Activated T-helper 1 cell treated with anti-CD3 and anti-CD28 coated beads, Interleukin-12 subunit alpha, Interleukin-12 subunit beta, Interleukin-2, Interleukin-4 antibody, amounts not matched to agents 30 ng/mL and 10 ng/mL and 1 ng/mL, durations not matched to agents 14 hours and 24 hours and 36 hours (primary cell): ENCODE measurements at regions of chr19 and their contacts with region 1.

Region 1: DNA sequence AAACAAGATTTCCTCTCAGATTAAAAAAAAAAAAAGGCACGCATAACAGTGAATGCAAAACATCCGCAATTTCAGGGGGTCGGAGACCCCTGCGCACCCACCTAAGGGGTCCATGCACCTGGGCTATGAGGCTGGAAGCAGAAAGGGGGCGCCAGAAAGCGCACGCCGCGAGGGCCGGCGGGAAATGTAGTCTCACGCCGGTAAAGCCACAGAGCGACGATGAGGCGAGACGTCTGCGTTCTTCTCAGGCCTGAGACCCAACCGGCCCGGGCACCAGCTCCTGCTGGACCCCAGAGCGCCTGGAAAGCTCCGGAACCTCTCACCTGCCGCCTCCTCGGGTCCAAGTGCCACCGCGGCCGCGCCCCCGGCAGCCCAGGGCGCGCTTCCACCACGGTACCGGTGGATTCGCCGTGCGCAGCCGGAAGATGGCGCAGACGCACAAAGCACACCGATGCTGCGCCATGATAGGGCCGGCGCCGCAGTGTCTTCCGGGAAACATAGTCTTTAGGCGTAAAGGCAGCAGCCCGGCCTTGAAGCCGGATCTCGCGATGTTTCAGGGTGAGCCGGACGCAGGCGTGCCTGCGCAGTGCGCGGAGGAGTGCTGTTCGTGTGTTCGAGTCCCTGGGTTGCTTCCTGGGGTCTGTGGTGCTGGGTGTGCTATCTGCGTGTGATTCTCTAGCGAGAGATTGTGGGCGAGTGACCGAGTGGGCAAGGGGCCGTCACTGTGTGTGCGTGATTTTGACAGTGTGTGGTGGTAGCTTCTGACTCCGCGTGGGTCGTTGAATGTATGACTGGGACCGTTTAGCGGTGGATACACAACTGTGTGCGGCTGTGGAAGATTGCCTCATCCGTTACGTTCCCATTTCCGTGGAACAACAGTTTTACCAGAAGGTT is at the start of gene ZNF582:
- DNase-seq: peak; percentile 82
- H3K4me3 Mint-ChIP-seq: peak within 1 kb of the TSS; percentile 94
- H3K27ac Mint-ChIP-seq: peak within 1 kb of the TSS; percentile 90
- H3K4me1 Mint-ChIP-seq: peaks cover 7% of the 10 kb centered on the region
- H3K27me3 Mint-ChIP-seq: peaks cover 1% of the 10 kb centered on the region
- total RNA-seq, gene ZNF582: 1.2 and 1.3 TPM in 2 replicates

Region 2: DNA sequence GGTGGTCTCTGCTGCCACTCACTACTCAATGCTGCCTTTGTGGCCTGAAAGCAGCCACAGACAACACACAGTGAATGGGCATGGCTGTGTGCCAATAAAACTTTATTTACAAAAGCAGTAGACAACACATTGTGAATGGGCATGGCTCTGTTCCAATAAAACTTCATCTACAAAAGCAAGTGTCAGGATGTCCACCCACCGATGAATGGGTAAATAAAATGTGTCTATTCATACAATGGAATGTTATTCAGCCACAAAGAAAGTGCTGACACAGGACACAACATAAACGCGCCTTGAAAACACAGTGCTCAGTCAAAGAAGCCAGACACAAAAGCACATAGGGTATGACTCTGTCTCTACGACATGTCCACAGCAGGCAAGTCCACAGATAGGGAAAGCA is 98.8 kb before region 1 on chr19:
- intact Hi-C with region 1: no loop called
- DNase-seq: no peak
- H3K4me3 Mint-ChIP-seq: no peak overlapping the region
- H3K27ac Mint-ChIP-seq: no peak overlapping the region
- H3K4me1 Mint-ChIP-seq: no peaks in the 10 kb centered on the region
- H3K27me3 Mint-ChIP-seq: no peaks in the 10 kb centered on the region

Region 3: GRCh38 chr19:56367829-56368711 is 25.3 kb before region 1 on chr19:
- intact Hi-C with region 1: loop called (anchors 1 kb)
- DNase-seq: peak; percentile 64
- H3K4me3 Mint-ChIP-seq: peak overlapping the region; percentile 85
- H3K27ac Mint-ChIP-seq: peak overlapping the region; percentile 57
- H3K4me1 Mint-ChIP-seq: peaks cover 15% of the 10 kb centered on the region
- H3K27me3 Mint-ChIP-seq: no peaks in the 10 kb centered on the region

Region 4: GRCh38 chr19:56477429-56478338 is 84.3 kb after region 1 on chr19:
- intact Hi-C with region 1: no loop called
- DNase-seq: peak; percentile 5
- H3K4me3 Mint-ChIP-seq: peak overlapping the region; percentile 70
- H3K27ac Mint-ChIP-seq: peak overlapping the region; percentile 63
- H3K4me1 Mint-ChIP-seq: no peaks in the 10 kb centered on the region
- H3K27me3 Mint-ChIP-seq: no peaks in the 10 kb centered on the region

Region 5: GRCh38 chr19:56567274-56568120 is 174.1 kb after region 1 on chr19 and contains the start of gene ZNF470:
- intact Hi-C with region 1: loop called (anchors 2 kb)
- DNase-seq: peak; percentile 82
- H3K4me3 Mint-ChIP-seq: peak within 1 kb of the TSS; percentile 87
- H3K27ac Mint-ChIP-seq: peak within 1 kb of the TSS; percentile 89
- H3K4me1 Mint-ChIP-seq: no peaks in the 10 kb centered on the region
- H3K27me3 Mint-ChIP-seq: no peaks in the 10 kb centered on the region
- total RNA-seq, gene ZNF470: 1.2 and 2.4 TPM in 2 replicates

Region 6: GRCh38 chr19:56594783-56595547 is 201.6 kb after region 1 on chr19 and contains the start of gene ZNF71:
- intact Hi-C with region 1: loop called (anchors 5 kb)
- DNase-seq: peak; percentile 82
- H3K4me3 Mint-ChIP-seq: peak within 1 kb of the TSS; percentile 92
- H3K27ac Mint-ChIP-seq: peak within 1 kb of the TSS; percentile 59
- H3K4me1 Mint-ChIP-seq: peaks cover 14% of the 10 kb centered on the region
- H3K27me3 Mint-ChIP-seq: no peaks in the 10 kb centered on the region
- total RNA-seq, gene ZNF71: 5.1 and 5.9 TPM in 2 replicates